Aorta (tissue), 5 donors: ENCODE measurements at regions of chr2 and their contacts with region 1.

Region 1: DNA sequence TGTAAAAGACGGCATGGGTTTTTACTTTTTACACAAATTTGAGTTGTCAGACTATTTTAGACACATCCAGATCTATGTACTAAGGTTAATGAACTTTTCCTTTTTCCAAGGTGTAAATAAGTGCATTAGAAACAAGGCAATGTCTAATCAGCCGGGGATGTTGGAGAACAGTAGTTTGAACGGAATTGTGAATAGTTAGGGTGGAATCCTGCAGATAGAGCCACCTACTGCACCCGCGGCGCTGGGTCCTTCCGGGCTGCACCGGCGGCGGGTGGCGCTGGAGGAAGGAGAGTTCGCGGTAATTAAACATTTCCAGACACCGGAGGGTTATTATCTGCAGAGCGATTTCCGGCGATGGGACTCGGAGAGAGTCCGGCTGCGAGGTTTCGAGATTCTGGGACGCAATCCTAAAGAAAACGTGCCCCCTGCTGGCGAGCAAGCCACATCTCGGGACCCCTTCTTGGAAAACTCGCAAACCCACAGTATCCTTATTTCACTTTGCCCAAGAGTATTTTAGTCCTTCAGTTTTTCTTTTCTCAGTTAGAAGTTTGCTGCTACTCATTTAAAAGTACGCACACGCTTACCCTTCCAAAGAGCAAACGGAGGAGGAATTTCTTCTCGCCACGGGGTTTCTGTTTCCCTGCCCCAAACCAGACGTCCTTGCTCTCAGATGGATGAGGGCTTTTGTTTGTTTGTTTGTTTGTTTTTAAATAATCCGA is 4.5 kb upstream of the OSR1 start:
- DNase-seq: peak; percentile 86 to 93
- ATAC-seq: peak; percentile 79
- H3K4me3 ChIP-seq: peak overlapping the region; percentile 66 to 88
- H3K27ac ChIP-seq: no peak overlapping the region
- H3K4me1 ChIP-seq: no peaks in the 10 kb centered on the region
- H3K27me3 ChIP-seq: no peaks in the 10 kb centered on the region

Region 2: GRCh38 chr2:18749912-18750526 is 612.9 kb before region 1 on chr2:
- intact Hi-C with region 1: loop called in 1 of 2 experiments (anchors 2 kb)
- DNase-seq: peak; percentile 56 to 68
- ATAC-seq: peak; percentile 82
- H3K4me3 ChIP-seq: no peak overlapping the region
- H3K27ac ChIP-seq: no peak overlapping the region
- H3K4me1 ChIP-seq: peaks cover 0 to 2% of the 10 kb centered on the region in 2 donors
- H3K27me3 ChIP-seq: no peaks in the 10 kb centered on the region

Region 3: GRCh38 chr2:19673213-19673791 is 310.4 kb after region 1 on chr2:
- intact Hi-C with region 1: loop called (anchors 5 to 10 kb)
- DNase-seq: no peak
- ATAC-seq: no peak
- H3K4me3 ChIP-seq: no peak overlapping the region
- H3K27ac ChIP-seq: no peak overlapping the region
- H3K4me1 ChIP-seq: peaks cover 0 to 2% of the 10 kb centered on the region in 2 donors
- H3K27me3 ChIP-seq: no peaks in the 10 kb centered on the region

Region 4: GRCh38 chr2:19685731-19686130 is 322.8 kb after region 1 on chr2:
- intact Hi-C with region 1: loop called in 1 of 2 experiments (anchors 5 kb)
- DNase-seq: no peak
- ATAC-seq: no peak
- H3K4me3 ChIP-seq: no peak overlapping the region
- H3K27ac ChIP-seq: no peak overlapping the region
- H3K4me1 ChIP-seq: peaks cover 0 to 4% of the 10 kb centered on the region in 2 donors
- H3K27me3 ChIP-seq: no peaks in the 10 kb centered on the region

Region 5: DNA sequence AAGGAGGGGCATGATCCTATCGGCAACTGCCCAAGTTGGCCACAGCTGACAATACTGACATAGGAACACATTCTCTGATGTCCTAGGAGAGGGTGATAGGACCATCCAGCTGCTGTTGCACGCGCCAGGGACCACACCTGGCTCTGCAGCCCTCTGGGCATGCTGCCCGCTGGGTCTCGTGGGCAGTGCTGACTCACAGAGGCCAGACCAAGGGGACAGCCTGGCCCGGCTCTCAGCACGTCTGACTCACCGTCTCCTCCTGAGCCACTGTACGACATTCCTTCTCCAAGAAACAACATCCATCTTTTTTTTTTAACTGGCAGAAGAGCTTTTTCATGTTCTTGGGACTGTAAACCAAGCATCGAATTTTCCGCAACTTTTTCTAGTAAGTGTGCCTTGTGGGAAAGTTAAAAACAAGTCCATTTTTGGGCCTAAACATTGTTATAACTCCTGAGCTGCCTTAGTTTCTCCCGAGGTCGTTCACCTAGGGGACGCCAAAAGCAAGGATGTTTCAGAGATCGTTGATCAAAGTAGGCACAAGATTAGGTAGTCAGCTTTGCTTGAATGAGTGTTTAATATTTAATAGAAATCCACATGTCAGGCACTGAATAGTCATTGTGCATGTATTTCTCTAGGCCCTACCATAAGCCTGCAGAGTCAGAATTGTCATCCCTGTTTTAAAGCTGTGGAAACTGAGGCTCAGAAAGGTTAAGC is 438.6 kb after region 1 on chr2:
- intact Hi-C with region 1: loop called in 1 of 2 experiments (anchors 5 kb)
- DNase-seq: peak; percentile 94 to 97
- ATAC-seq: peak; percentile 88
- H3K4me3 ChIP-seq: no peak overlapping the region
- H3K27ac ChIP-seq: peak overlapping the region; percentile 94 to 99
- H3K4me1 ChIP-seq: no peaks in the 10 kb centered on the region
- H3K27me3 ChIP-seq: no peaks in the 10 kb centered on the region